Activated naive CD8-positive, alpha-beta T cell treated with anti-CD3 and anti-CD28 coated beads, Interleukin-2, amount 10 ng/mL, durations not matched to agents 7 days and 5 days (primary cell): ENCODE measurements at regions of chr16 and their contacts with region 1.

Region 1: GRCh38 chr16:67660564-67661028 is at the start of gene PARD6A:
- DNase-seq: peak; percentile 93
- ATAC-seq: peak; percentile 85
- H3K4me3 Mint-ChIP-seq: peak within 1 kb of the TSS; percentile 95
- H3K27ac Mint-ChIP-seq: peak within 1 kb of the TSS; percentile 95
- H3K4me1 Mint-ChIP-seq: peaks cover 14% of the 10 kb centered on the region
- H3K27me3 Mint-ChIP-seq: no peaks in the 10 kb centered on the region
- total RNA-seq, gene PARD6A: 9.5 to 11.1 TPM

Region 2: DNA sequence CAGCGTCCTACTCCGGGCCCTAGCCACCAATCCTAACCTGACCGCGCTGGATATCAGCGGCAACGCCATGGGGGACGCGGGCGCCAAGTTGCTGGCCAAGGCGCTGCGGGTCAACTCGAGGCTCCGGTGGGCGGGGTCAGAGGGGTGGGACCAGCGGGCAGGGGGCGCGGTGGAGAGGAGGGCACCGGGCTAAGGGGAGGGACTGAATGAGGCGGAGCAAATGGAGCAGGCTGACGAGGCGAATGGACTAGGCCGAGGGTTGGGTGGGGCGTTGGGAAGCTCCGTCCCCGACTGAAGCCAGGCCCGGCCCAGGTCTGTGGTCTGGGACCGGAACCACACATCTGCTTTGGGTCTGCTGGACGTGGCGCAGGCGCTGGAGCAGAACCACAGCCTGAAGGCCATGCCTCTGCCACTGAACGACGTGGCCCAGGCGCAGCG is 11.1 kb before region 1 on chr16:
- POLR2A ChIA-PET with region 1: interaction called, 72 read pairs
- DNase-seq: no peak
- ATAC-seq: no peak
- H3K4me3 Mint-ChIP-seq: no peak overlapping the region
- H3K27ac Mint-ChIP-seq: no peak overlapping the region
- H3K4me1 Mint-ChIP-seq: peaks cover 9% of the 10 kb centered on the region
- H3K27me3 Mint-ChIP-seq: no peaks in the 10 kb centered on the region